OCI-LY7 (cell line): ENCODE measurements at regions of chr10 and their contacts with region 1.

Region 1: DNA sequence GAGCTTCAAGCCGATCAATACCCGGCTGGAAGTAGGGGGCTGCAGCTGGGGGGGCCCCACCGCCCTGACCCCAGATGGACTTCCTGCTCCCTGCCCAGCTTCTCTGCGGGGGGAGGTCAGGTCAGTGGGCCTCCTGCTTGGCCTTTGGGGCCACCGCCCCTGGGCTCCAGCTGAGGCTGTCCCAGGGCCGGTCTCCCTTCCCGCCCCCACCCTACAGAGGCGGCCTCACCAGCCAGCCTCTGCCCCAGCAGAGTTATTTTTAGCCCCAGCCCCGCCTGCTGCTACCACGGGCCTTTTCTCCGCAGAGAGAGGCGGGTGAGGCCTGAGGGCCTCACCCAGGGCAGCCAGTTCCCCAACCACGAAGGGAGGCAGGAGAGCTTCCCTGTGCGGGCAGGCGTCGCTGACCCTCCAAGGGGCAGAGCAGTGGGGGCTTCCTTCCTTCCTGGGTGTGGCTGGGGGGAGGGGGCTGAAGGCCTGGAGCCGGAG is 24.4 kb downstream of the PWWP2B start:
- DNase-seq: peak; percentile 83
- H3K4me3 ChIP-seq: peak overlapping the region; percentile 49
- H3K27ac ChIP-seq: peak overlapping the region; percentile 91
- H3K4me1 ChIP-seq: peaks cover 63% of the 10 kb centered on the region
- CTCF ChIP-seq: no peak

Region 2: DNA sequence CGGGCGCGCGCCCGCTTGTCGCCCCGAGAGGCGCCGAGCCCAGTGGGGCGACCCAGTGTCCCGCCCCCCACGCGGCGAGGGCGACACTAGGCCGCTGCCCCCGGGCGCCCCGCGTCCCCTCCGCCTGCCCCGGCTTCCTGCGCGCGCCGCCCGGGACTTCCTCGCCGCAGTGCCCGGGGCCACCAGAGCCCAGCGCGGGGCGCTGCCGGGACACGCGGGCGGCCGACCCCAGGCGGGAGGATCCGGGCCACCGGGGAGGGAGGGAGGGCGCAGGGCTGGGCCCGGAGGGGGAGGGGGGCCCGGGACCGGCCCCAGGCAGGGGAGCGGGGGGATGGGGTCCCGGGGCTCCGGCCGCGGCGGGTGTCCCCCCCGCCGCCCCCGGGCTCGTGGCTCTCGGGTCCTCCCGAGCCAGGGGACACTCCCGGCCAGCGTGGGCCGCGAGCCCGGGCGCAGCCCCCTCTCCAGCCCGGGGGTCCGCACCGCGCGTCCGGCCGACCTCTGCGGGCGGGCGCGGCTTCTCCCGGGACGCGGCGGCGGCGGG is 24.9 kb before region 1 on chr10:
- CTCF ChIA-PET with region 1: no interaction called
- POLR2A ChIA-PET with region 1: interaction called, 3 read pairs
- intact Hi-C with region 1: loop called (anchors 1 kb)
- DNase-seq: peak; percentile 57
- H3K4me3 ChIP-seq: peak overlapping the region; percentile 47
- H3K27ac ChIP-seq: no peak overlapping the region
- H3K4me1 ChIP-seq: peaks cover 9% of the 10 kb centered on the region
- CTCF ChIP-seq: no peak